ENCODE measurements at regions of chr16 and their contacts with region 1.

Region 1: DNA sequence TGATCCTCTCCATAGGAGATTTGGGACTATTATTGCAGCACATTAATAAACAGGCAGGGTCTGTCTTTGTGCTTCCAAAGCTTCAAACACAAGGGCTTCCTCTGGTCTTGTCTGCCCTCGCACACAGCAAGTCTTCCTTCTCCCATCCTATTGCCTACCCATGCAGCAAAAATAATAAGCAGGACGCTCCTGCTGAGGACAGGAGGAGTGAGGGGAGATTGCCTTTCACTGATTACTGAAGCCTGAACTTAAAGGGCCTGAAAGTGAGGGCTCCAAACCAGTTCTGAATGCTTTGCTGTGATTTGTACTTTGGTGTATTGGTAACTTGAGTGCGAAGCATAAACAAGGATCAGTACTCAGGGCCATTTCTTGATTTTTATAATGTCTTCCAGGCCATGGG is 197.6 kb upstream of the XYLT1 start:
- DNase-seq: no peak
- ATAC-seq: no peak

Region 2: DNA sequence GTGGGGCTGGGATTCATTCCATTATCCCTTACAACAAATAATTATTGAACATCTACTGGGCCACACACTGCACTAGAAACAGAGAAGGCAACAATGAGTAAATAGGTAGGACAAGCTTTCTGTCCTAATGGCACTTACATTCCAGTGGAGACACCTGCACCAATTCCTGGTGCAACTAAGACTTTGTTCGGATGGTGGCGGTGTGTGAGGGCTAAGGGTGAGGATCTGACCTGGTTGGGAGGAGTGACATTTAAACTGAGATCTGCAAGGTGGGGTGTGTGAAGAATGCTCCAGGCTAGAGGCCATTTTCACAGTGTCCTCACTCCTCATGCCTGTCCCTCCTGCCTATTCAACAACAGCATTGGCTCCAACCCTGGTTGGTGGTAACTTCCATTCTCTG is 707.6 kb before region 1 on chr16:
- intact Hi-C with region 1: loop called in 1 of 2 experiments (anchors 10 kb)
- DNase-seq: no peak
- ATAC-seq: no peak

Measured in left colon (tissue), 2 donors.